B cell (primary cell): ENCODE measurements at regions of chr5 and their contacts with region 1.

Region 1: DNA sequence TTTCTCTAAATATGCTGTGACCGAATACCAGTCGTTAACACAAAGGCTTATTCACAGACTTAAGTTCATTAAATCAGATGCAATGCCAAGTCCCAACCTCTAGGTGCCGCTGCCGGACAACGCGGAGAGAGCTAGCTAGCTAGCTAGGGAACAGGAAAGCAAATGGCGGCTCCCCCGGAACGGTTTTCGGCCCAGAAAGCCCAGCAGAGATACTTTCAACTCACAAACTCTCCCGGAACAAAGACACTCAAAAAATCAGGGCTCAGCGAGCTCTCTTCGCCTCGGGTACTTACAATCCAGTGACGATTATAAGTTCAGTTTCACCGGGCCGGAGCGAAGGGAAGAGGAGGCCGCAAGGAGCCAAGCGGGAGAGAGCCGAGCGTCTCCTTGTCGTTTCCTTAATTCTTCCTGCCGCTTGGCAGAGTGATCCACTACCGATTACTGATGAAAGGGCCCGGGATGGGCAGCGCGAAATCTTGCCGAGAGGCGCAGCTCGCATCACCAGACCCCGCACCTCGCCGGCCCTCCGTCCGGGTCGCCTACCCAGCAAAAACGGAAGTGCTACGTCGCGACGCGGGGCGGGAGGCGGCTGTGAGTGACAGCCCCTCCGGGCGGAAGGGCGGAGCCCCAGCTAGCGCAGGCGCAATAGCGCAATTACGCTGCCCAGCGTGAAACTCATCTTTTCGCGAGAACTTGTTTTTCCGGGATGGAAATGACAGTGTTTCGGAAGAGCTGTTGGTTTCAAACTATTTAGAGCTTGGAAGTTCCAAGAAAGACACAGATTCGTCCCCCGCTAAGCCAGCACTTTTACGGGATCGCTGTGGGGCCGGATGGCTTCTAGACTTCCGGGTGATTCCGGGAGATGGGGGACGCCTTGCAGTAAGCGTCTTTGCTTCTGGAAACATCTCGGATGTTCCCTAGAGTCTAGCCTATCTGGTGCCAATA is at the start of gene TAF7:
- DNase-seq: peak; percentile 96
- ATAC-seq: peak; percentile 90
- H3K4me3 ChIP-seq: peak within 1 kb of the TSS; percentile 78 to 100 (median 97)
- H3K4me3 Mint-ChIP-seq: peak within 1 kb of the TSS; percentile 96
- H3K27ac ChIP-seq: peak within 1 kb of the TSS; percentile 95 to 96
- H3K27ac Mint-ChIP-seq: peak within 1 kb of the TSS; percentile 98
- H3K4me1 ChIP-seq: peaks cover 17 to 20% of the 10 kb centered on the region in 2 donors
- H3K4me1 Mint-ChIP-seq: peaks cover 28% of the 10 kb centered on the region
- H3K27me3 ChIP-seq: no peaks in the 10 kb centered on the region
- H3K27me3 Mint-ChIP-seq: no peaks in the 10 kb centered on the region
- CTCF ChIP-seq: peak; percentile 89
- total RNA-seq, gene TAF7: 119 TPM in 2 replicates

Region 2: DNA sequence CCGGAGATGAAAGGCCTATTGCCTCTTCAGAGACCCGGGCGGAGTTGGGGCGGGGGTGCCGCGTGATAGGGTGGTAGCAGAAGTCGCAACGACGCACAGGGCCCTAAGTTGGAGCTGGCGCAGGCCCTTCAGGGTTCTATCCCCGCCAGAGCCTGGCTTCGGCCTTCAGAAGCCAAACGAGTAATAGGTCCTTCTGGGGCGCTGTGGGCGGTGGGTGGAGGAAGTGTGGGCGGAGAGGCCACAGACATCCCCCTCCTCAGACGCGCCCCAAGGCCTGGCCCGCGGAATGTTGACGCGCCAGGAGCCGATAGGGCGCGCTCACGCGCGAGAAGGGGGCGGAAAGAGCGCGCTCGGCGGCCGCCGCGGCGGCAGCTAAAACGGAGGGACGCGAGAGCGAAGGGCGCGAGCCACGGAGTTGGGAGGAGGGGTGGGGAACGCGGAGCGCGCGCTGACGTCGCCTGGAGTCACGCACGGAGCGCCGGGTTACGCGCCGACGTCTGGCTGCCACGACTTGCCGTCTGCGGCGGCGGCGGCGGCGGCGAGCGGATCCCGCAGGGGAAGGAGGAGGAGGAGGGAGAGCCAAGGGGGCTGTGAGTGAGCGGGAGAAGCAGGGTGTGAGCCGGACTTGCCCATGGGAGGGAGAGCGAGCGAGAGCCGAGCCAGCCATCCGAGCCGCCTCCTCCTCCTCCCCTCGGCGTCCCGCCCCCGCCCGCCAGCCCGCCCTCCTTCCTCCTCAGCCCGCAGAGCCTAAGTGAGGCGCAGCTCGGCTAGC is 1213.0 kb before region 1 on chr5:
- CTCF ChIA-PET with region 1: no interaction called
- POLR2A ChIA-PET with region 1: no interaction called
- intact Hi-C with region 1: loop called (anchors 10 kb)
- DNase-seq: peak; percentile 98
- ATAC-seq: peak; percentile 85
- H3K4me3 ChIP-seq: peak overlapping the region in 4 of 5 experiments; percentile 60 to 75 (median 68)
- H3K4me3 Mint-ChIP-seq: peak overlapping the region; percentile 96
- H3K27ac ChIP-seq: peak overlapping the region; percentile 97 to 99
- H3K27ac Mint-ChIP-seq: peak overlapping the region; percentile 99
- H3K4me1 ChIP-seq: peaks cover 35% of the 10 kb centered on the region in 2 donors
- H3K4me1 Mint-ChIP-seq: peaks cover 46% of the 10 kb centered on the region
- H3K27me3 ChIP-seq: peaks cover 5 to 23% (median 13%) of the 10 kb centered on the region in 4 experiments
- H3K27me3 Mint-ChIP-seq: peaks cover 20% of the 10 kb centered on the region
- CTCF ChIP-seq: peak; percentile 43

Region 3: DNA sequence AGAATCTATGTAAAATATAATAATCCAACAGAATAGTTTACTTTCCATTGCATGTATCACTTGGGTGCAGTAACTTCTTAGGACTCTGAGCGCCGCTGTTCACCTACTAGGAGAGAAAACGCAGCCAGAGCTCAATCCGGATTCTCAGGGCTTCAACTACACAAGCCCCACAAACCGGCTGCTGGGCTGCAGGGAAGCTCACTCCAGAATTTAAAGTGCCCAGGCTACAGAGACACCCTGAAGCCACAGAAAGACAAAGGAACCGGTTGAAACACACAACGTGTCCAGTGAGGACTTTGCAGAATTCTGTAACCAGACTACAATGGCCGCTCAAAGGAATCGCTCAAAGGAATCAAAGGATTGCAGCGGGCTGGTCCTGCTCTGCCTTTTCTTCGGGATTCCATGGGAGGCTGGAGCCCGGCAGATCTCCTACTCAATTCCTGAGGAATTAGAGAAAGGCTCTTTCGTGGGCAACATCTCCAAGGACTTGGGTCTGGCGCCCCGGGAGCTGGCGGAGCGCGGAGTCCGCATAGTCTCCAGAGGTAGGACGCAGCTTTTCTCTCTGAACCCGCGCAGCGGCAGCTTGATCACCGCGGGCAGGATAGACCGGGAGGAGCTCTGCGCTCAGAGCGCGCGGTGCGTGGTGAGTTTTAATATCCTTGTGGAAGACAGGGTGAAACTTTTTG is 92.5 kb after region 1 on chr5 and contains the start of gene PCDHGA10:
- CTCF ChIA-PET with region 1: interaction called, 4 read pairs
- POLR2A ChIA-PET with region 1: no interaction called
- intact Hi-C with region 1: loop called (anchors 10 kb)
- DNase-seq: peak; percentile 65
- ATAC-seq: peak; percentile 68
- H3K4me3 ChIP-seq: peak within 1 kb of the TSS; percentile 5 to 63 (median 45)
- H3K4me3 Mint-ChIP-seq: peak within 1 kb of the TSS; percentile 87
- H3K27ac ChIP-seq: no peak within 1 kb of the TSS
- H3K27ac Mint-ChIP-seq: peak within 1 kb of the TSS; percentile 17
- H3K4me1 ChIP-seq: peaks cover 11 to 15% of the 10 kb centered on the region in 2 donors
- H3K4me1 Mint-ChIP-seq: peaks cover 18% of the 10 kb centered on the region
- H3K27me3 ChIP-seq: peaks cover 0 to 69% (median 55%) of the 10 kb centered on the region in 4 experiments
- H3K27me3 Mint-ChIP-seq: peaks cover 59% of the 10 kb centered on the region
- CTCF ChIP-seq: peak; percentile 82
- total RNA-seq, gene PCDHGA10: 1.9 and 2.0 TPM in 2 replicates

Region 4: DNA sequence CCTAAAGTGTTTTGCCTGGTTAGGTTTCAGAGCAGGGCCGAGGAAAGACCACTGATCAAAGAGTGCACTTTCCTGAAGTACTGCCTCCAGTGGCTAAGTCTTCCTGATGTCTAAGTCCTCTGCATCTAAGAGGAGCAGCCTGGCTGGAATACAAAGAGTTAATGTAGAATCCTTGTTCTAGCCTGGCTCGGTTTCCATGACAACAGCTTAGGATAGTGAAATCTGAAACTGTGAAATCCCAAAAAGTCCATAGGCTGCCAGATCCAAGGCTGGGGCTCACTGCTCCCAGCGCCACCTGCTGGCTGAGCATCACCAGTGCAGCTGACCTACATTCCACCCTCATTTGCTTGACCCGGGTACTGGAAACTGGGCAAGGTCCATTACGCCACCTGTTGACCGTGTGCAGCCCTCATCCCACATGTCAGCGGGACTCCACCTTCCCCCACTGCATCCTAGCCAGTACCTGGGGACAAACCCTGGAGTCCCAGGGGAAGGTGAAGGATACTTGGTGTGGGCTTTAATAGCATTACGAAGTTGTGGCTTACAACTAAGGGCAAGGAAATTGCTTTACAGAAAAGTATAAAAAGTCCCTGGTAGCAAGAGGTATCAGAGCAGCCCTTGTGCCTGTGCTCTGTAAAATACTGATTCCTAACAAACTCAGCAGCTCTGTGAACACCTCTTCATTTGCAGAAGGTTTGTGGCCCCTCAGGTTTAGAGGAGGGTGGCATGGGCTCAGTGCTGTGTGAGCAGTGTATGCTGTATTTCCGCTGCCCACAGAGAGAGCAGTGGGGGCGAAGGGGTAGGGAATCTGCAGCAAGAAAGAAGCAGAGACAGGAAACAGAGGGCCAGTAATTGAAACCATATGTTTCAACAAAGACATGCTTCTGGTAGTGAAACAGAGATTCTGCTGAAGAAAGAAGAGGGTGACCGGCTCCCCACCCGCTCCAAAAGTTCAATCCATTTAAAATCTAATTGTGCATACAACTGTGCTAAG is 204.4 kb after region 1 on chr5:
- CTCF ChIA-PET with region 1: interaction called, 19 read pairs
- POLR2A ChIA-PET with region 1: no interaction called
- intact Hi-C with region 1: no loop called
- DNase-seq: peak; percentile 78
- ATAC-seq: peak; percentile 89
- H3K4me3 ChIP-seq: no peak overlapping the region
- H3K4me3 Mint-ChIP-seq: no peak overlapping the region
- H3K27ac ChIP-seq: no peak overlapping the region
- H3K27ac Mint-ChIP-seq: peak overlapping the region; percentile 67
- H3K4me1 ChIP-seq: peaks cover 9 to 10% of the 10 kb centered on the region in 2 donors
- H3K4me1 Mint-ChIP-seq: peaks cover 18% of the 10 kb centered on the region
- H3K27me3 ChIP-seq: no peaks in the 10 kb centered on the region
- H3K27me3 Mint-ChIP-seq: no peaks in the 10 kb centered on the region
- CTCF ChIP-seq: peak; percentile 100

Region 5: GRCh38 chr5:141618804-141619554 is 298.5 kb after region 1 on chr5 and contains the start of gene DIAPH1:
- CTCF ChIA-PET with region 1: interaction called, 5 read pairs
- POLR2A ChIA-PET with region 1: interaction called, 4 read pairs
- intact Hi-C with region 1: loop called (anchors 1 kb)
- DNase-seq: peak; percentile 99
- ATAC-seq: peak; percentile 89
- H3K4me3 ChIP-seq: peak within 1 kb of the TSS; percentile 84 to 98 (median 94)
- H3K4me3 Mint-ChIP-seq: peak within 1 kb of the TSS; percentile 93
- H3K27ac ChIP-seq: peak within 1 kb of the TSS; percentile 86 to 92
- H3K27ac Mint-ChIP-seq: peak within 1 kb of the TSS; percentile 91
- H3K4me1 ChIP-seq: peaks cover 52 to 55% of the 10 kb centered on the region in 2 donors
- H3K4me1 Mint-ChIP-seq: peaks cover 59% of the 10 kb centered on the region
- H3K27me3 ChIP-seq: no peaks in the 10 kb centered on the region
- H3K27me3 Mint-ChIP-seq: no peaks in the 10 kb centered on the region
- CTCF ChIP-seq: peak; percentile 94
- total RNA-seq, gene DIAPH1: 111 and 113 TPM in 2 replicates

Region 6: GRCh38 chr5:142012792-142013388 is 692.4 kb after region 1 on chr5 and contains the start of gene GNPDA1:
- CTCF ChIA-PET with region 1: no interaction called
- POLR2A ChIA-PET with region 1: no interaction called
- intact Hi-C with region 1: loop called (anchors 10 kb)
- DNase-seq: peak; percentile 83
- ATAC-seq: peak; percentile 88
- H3K4me3 ChIP-seq: peak within 1 kb of the TSS; percentile 44 to 74 (median 67)
- H3K4me3 Mint-ChIP-seq: peak within 1 kb of the TSS; percentile 89
- H3K27ac ChIP-seq: peak within 1 kb of the TSS; percentile 45 to 59
- H3K27ac Mint-ChIP-seq: peak within 1 kb of the TSS; percentile 78
- H3K4me1 ChIP-seq: peaks cover 27 to 30% of the 10 kb centered on the region in 2 donors
- H3K4me1 Mint-ChIP-seq: peaks cover 43% of the 10 kb centered on the region
- H3K27me3 ChIP-seq: no peaks in the 10 kb centered on the region
- H3K27me3 Mint-ChIP-seq: peaks cover 3% of the 10 kb centered on the region
- CTCF ChIP-seq: no peak
- total RNA-seq, gene GNPDA1: 12.1 and 15.0 TPM in 2 replicates

Region 7: GRCh38 chr5:142034994-142035393 is 714.5 kb after region 1 on chr5:
- CTCF ChIA-PET with region 1: no interaction called
- POLR2A ChIA-PET with region 1: no interaction called
- intact Hi-C with region 1: no loop called
- DNase-seq: no peak
- ATAC-seq: no peak
- H3K4me3 ChIP-seq: no peak overlapping the region
- H3K4me3 Mint-ChIP-seq: no peak overlapping the region
- H3K27ac ChIP-seq: no peak overlapping the region
- H3K27ac Mint-ChIP-seq: no peak overlapping the region
- H3K4me1 ChIP-seq: no peaks in the 10 kb centered on the region
- H3K4me1 Mint-ChIP-seq: no peaks in the 10 kb centered on the region
- H3K27me3 ChIP-seq: peaks cover 0 to 12% (median 0%) of the 10 kb centered on the region in 4 experiments
- H3K27me3 Mint-ChIP-seq: peaks cover 44% of the 10 kb centered on the region
- CTCF ChIP-seq: no peak